GM12878 (cell line): ENCODE measurements at regions of chr1 and their contacts with region 1.

Region 1: DNA sequence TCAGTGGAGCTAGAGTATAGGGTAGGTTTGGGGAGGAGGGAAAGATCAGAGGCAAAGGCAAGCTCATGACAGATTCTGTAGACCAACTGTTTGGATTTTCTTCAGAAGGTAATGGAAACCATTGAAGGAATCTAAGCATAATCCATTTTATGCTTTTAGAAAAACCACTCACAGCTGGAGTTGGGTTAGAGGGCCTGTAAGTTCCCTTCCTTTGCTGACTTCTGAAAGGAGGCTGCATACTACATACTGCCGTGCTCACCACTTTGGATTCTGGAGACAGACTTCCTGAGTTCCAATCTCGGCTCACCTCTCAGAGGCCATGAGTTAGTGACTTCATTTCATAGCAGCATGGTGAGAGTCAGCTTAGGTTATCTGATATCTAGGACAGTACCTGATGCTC is 6.4 kb upstream of the SYT2 start:
- DNase-seq: no peak
- ATAC-seq: no peak
- H3K4me3 ChIP-seq: no peak overlapping the region
- H3K27ac ChIP-seq: no peak overlapping the region
- H3K4me1 ChIP-seq: no peaks in the 10 kb centered on the region
- H3K27me3 ChIP-seq: peaks cover under 1 to 13% of the 10 kb centered on the region in 2 experiments
- CTCF ChIP-seq: no peak
- EP300 ChIP-seq: no peak
- POLR2A ChIP-seq: no peak
- RAD21 ChIP-seq: no peak

Region 2: GRCh38 chr1:202192770-202193613 is 523.7 kb before region 1 on chr1:
- CTCF ChIA-PET with region 1: interaction called, 17 read pairs
- POLR2A ChIA-PET with region 1: no interaction called
- RAD21 ChIA-PET with region 1: interaction called, 16 read pairs
- SMC1A ChIA-PET with region 1: interaction called, 6 read pairs
- in situ Hi-C with region 1: no loop called
- intact Hi-C with region 1: loop called (anchors 2 kb)
- DNase-seq: no peak
- ATAC-seq: peak; percentile 80
- H3K4me3 ChIP-seq: no peak overlapping the region
- H3K27ac ChIP-seq: no peak overlapping the region
- H3K4me1 ChIP-seq: no peaks in the 10 kb centered on the region
- H3K27me3 ChIP-seq: peaks cover 7 to 11% of the 10 kb centered on the region in 2 experiments
- CTCF ChIP-seq: peak; percentile 81 to 95 (median 86)
- EP300 ChIP-seq: no peak
- POLR2A ChIP-seq: no peak
- RAD21 ChIP-seq: peak; percentile 71

Region 3: DNA sequence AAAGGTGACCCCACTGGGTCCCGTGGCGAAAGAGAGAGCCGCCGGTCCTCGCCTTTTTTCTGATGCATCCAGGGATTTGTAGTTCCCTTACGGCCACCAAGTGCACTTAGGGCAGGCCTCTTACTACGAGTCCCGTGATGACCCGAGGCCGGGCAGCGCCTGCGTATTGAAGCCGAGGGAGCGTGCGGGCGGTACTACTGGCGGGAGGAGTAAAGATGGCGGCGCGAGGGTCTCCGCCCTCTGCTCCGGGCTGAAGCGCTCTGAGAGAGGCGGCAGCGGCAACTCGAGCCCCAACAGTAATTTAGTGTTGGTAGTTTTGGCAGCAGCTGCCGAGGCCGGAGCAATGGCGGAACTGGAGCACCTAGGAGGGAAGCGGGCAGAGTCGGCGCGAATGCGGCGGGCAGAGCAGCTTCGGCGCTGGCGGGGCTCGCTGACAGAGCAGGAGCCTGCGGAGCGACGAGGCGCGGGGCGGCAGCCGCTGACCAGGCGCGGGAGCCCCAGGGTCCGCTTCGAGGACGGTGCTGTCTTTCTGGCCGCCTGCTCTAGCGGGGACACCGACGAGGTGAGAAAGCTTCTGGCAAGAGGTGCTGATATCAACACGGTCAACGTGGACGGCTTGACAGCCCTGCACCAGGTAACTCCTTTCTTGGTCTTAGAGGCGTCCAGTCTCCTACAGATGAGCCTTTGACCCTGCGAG is 368.0 kb before region 1 on chr1 and contains the start of gene PPP1R12B:
- CTCF ChIA-PET with region 1: interaction called, 48 read pairs
- POLR2A ChIA-PET with region 1: no interaction called
- RAD21 ChIA-PET with region 1: interaction called, 4 read pairs
- SMC1A ChIA-PET with region 1: interaction called, 3 read pairs
- in situ Hi-C with region 1: no loop called
- intact Hi-C with region 1: loop called (anchors 1 kb)
- DNase-seq: peak; percentile 94
- ATAC-seq: peak; percentile 99
- H3K4me3 ChIP-seq: peak within 1 kb of the TSS; percentile 88
- H3K27ac ChIP-seq: peak within 1 kb of the TSS; percentile 40; the same call in 1 of the 2 replicates
- H3K4me1 ChIP-seq: no peaks in the 10 kb centered on the region; the same call in 1 of the 2 replicates
- H3K27me3 ChIP-seq: no peaks in the 10 kb centered on the region
- CTCF ChIP-seq: no peak
- EP300 ChIP-seq: no peak
- POLR2A ChIP-seq: peak; percentile 77
- RAD21 ChIP-seq: no peak
- polyA plus RNA-seq, gene PPP1R12B: 0.29 to 0.61 TPM

Region 4: DNA sequence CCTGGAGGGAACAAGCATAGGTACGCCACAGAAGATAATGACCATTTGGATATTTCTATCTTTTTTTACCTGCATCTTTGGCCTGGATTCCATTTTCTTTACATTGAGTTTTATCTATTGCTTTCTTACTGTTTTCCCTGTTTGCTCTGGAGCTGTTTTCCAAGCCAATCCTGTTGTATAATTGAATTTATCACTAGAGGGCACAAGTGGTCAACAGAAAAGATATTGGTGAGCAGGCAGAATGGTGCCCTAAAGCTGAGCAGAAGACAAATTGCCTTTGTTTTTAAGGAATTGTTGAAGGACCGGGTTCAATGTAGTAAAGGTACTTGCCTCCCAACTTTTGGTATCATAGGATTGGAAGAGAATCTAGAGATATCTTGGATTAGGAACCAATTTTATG is 215.4 kb before region 1 on chr1:
- CTCF ChIA-PET with region 1: interaction called, 10 read pairs
- POLR2A ChIA-PET with region 1: no interaction called
- RAD21 ChIA-PET with region 1: interaction called, 6 read pairs
- SMC1A ChIA-PET with region 1: interaction called, 4 read pairs
- in situ Hi-C with region 1: no loop called
- intact Hi-C with region 1: loop called (anchors 1 kb)
- DNase-seq: no peak
- ATAC-seq: peak; percentile 76
- H3K4me3 ChIP-seq: no peak overlapping the region
- H3K27ac ChIP-seq: no peak overlapping the region
- H3K4me1 ChIP-seq: no peaks in the 10 kb centered on the region
- H3K27me3 ChIP-seq: no peaks in the 10 kb centered on the region
- CTCF ChIP-seq: peak; percentile 26 to 50 (median 34); a peak in 5 of 6 replicates
- EP300 ChIP-seq: no peak
- POLR2A ChIP-seq: no peak
- RAD21 ChIP-seq: peak; percentile 77

Region 5: DNA sequence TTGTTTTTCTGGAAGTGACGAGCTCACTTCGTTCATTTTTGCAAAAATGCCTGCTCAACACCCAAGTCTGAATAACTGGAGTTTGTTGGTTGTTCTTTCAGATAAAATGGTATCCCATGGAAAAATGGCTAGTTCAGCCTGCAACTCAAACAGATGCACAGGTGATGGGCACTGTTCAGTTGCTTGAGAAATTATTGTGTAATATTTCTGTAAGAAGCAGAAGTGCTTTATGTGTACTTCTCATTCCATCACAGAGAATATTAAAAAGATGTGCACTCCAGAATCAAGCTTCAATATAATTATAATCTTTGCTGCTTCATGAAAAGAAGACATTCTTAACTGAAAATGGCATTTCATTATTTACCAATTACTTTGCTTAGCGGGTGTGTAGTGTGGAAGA is 15.5 kb before region 1 on chr1:
- CTCF ChIA-PET with region 1: interaction called, 11 read pairs
- POLR2A ChIA-PET with region 1: no interaction called
- RAD21 ChIA-PET with region 1: interaction called, 3 read pairs
- SMC1A ChIA-PET with region 1: interaction called, 4 read pairs
- in situ Hi-C with region 1: no loop called
- intact Hi-C with region 1: no loop called
- DNase-seq: no peak
- ATAC-seq: no peak
- H3K4me3 ChIP-seq: no peak overlapping the region
- H3K27ac ChIP-seq: no peak overlapping the region
- H3K4me1 ChIP-seq: no peaks in the 10 kb centered on the region
- H3K27me3 ChIP-seq: peaks cover 8 to 11% of the 10 kb centered on the region in 2 experiments
- CTCF ChIP-seq: no peak
- EP300 ChIP-seq: no peak
- POLR2A ChIP-seq: no peak
- RAD21 ChIP-seq: no peak

Region 6: DNA sequence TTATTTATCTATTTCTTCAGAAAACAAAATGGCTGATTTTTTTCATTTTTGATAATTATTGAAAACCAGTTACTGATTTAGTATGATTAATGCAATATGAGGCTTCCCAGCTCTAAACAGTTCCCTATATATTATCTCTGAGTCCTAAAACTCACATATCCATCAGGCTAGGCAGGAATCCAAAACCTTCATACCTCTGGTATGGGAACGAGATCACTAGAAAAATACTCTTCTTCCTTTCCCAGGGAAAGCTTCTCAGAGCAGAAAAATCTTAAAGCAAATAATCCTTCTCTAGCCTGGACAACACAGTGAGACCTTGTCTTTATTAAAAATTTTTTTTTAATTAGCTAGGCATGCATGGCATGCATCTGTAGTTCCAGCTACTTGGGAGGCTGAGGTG is 49.1 kb after region 1 on chr1:
- CTCF ChIA-PET with region 1: no interaction called
- POLR2A ChIA-PET with region 1: no interaction called
- RAD21 ChIA-PET with region 1: no interaction called
- SMC1A ChIA-PET with region 1: no interaction called
- in situ Hi-C with region 1: no loop called
- intact Hi-C with region 1: no loop called
- DNase-seq: no peak
- ATAC-seq: no peak
- H3K4me3 ChIP-seq: no peak overlapping the region
- H3K27ac ChIP-seq: no peak overlapping the region
- H3K4me1 ChIP-seq: no peaks in the 10 kb centered on the region
- H3K27me3 ChIP-seq: no peaks in the 10 kb centered on the region
- CTCF ChIP-seq: no peak
- EP300 ChIP-seq: no peak
- POLR2A ChIP-seq: no peak
- RAD21 ChIP-seq: no peak